IMR-90 (cell line): ENCODE measurements at regions of chr12 and their contacts with region 1.

Region 1: DNA sequence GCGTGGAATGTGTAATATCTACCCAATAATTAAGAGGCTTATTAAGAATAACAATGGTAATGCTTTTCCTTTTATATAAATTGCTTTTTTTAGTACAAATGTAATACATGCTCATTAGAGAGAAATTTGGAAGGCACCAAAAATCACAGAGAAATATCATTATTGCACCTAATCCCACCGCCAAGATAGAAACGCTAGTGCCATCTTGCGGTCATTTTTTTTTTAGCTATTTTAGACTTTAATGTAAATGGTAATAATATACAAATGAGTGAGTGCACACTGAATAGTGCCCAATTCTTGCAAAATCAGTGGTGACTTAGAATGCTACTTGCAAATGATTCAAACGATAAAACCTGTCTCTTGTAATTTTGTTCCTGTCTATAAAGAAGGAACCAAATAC is 576.8 kb upstream of the TMEM132C start:
- DNase-seq: no peak
- ATAC-seq: no peak
- H3K4me3 ChIP-seq: no peak overlapping the region
- H3K27ac ChIP-seq: no peak overlapping the region
- H3K4me1 ChIP-seq: no peaks in the 10 kb centered on the region
- H3K27me3 ChIP-seq: no peaks in the 10 kb centered on the region
- CTCF ChIP-seq: peak; percentile 39
- POLR2A ChIP-seq: no peak
- RAD21 ChIP-seq: peak; percentile 44

Region 2: DNA sequence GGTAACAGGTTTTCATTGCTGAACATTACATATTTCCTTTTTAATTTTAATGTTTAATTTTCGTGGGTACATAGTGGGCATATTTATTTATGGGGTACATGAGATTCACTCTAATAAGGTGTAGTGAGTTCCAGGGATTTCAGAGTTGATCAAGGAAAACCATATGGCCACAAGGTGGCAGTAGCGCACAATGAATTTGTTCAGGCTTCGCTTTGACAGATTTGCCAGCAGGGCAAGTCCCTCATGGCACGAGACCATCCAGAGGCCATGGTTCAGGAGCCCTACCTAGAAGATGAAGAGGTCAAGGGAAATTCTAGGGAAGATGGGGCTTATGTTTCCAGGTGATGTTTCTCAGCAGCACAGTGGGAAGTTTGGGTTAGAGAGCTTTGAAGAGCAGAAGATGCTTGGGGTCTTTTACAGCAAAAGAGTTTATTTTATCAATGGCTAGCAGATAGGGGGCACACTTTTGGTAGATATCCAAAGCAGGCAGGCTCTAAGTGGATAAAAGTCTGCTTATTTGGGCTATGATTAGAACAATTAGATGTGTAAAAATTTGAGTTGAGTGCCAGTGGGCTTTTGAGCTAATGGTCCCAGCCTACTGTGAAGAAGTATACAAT is 1620.5 kb before region 1 on chr12:
- CTCF ChIA-PET with region 1: no interaction called
- POLR2A ChIA-PET with region 1: no interaction called
- dilution Hi-C with region 1: no loop called
- in situ Hi-C with region 1: no loop called
- intact Hi-C with region 1: loop called (anchors 10 kb)
- DNase-seq: peak; percentile 13
- ATAC-seq: no peak
- H3K4me3 ChIP-seq: no peak overlapping the region
- H3K27ac ChIP-seq: no peak overlapping the region
- H3K4me1 ChIP-seq: no peaks in the 10 kb centered on the region
- H3K27me3 ChIP-seq: no peaks in the 10 kb centered on the region
- CTCF ChIP-seq: peak; percentile 34; the same call in 1 of the 2 replicates
- POLR2A ChIP-seq: no peak
- RAD21 ChIP-seq: peak; percentile 41

Region 3: DNA sequence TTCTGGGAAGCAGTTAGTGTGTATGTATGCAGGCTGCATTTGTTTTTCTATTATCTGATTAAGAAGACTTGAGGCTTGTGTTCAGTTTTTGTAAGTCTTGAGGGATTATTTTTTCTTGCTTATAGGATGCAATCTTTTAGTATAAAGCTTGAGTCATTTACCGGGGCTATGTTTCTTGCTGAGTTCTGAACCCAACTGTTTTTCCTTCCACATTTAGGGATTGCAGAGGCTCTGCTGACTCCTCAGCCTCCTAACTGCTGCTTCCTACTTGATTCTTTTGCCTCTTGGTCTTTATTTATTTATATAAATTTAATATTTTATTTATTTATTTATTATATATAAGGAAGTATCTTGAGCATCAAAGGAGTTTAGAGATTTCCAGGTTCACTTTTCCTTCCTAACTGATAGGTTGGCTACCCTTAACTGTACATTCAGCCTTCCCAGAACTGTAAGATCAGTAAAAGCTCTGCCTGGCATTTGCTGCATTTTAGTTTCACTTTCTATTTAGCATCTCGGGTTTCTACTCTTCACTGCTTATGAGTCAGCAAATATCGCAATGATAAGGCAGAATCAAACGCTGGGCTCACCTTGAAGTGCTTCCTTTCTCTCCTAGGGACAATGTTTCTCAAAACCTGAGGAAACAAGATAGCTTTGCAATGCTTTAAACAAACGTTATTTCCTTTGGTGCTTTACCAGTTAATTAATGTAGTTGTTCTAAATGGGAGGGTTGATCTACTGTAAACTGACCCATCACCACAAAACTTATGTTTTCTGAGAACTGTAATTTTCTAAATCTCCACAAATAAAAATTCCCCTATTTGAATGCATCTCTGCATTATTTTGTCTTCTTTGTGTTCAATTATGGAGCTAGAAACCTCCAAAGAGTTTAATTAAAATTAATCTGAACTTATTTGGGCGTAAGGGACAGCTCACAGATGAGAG is 606.9 kb before region 1 on chr12:
- CTCF ChIA-PET with region 1: no interaction called
- POLR2A ChIA-PET with region 1: no interaction called
- dilution Hi-C with region 1: no loop called
- in situ Hi-C with region 1: no loop called
- intact Hi-C with region 1: loop called (anchors 10 kb)
- DNase-seq: peak; percentile 65
- ATAC-seq: peak; percentile 89
- H3K4me3 ChIP-seq: peak overlapping the region; percentile 57
- H3K27ac ChIP-seq: no peak overlapping the region
- H3K4me1 ChIP-seq: no peaks in the 10 kb centered on the region
- H3K27me3 ChIP-seq: no peaks in the 10 kb centered on the region
- CTCF ChIP-seq: no peak
- POLR2A ChIP-seq: no peak
- RAD21 ChIP-seq: no peak

Region 4: DNA sequence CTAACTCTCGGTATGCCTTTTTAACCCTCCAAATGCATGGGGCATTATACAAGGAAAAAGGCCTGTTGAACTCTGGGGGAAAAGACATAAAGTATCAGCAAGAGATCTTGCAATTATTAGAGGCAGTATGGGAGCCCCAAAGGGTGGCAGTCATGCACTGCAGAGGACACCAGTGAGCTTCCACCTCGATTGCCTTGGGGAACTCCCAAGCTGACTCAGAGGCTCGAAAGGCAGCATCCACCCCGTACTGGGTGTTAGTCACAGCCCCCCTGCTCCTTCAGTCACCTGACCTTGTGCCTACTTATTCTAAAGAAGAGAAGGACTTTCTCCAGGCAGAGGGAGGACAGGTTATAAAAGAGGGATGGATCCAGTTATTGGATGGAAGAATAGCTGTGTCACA is 204.6 kb before region 1 on chr12:
- CTCF ChIA-PET with region 1: no interaction called
- POLR2A ChIA-PET with region 1: no interaction called
- dilution Hi-C with region 1: no loop called
- in situ Hi-C with region 1: loop called (anchors 10 kb)
- intact Hi-C with region 1: no loop called
- DNase-seq: peak; percentile 86
- ATAC-seq: peak; percentile 76
- H3K4me3 ChIP-seq: no peak overlapping the region
- H3K27ac ChIP-seq: no peak overlapping the region
- H3K4me1 ChIP-seq: peaks cover 2% of the 10 kb centered on the region; the same call in 1 of the 2 replicates
- H3K27me3 ChIP-seq: no peaks in the 10 kb centered on the region
- CTCF ChIP-seq: peak; percentile 61
- POLR2A ChIP-seq: no peak
- RAD21 ChIP-seq: peak; percentile 73